IMR-90 (cell line): ENCODE measurements at regions of chr7 and their contacts with region 1.

Region 1: DNA sequence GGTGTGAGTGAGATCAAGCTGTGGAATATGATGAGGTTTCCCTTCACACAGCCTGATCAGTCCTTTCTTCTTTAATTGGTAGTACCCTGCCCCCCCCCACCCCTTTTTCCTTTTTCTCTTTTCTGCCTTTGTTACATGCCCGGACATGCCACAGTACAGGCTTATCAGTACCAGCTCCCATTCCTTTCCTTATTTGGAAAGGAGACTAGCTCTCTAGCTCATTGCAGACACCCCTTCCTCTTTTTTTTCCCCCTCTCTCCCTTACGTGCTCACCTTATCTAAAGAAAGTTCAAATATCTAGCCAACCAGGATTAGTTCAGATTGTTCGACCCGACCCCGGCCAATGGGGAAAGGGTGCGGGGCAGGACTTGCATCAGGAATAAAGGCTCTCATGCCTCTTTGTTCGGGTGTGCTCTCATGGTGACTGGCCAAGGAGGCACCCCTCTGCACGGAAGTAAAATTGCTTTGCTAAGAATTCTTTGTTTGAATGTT is 230.4 kb downstream of the ACTR3B start:
- DNase-seq: peak; percentile 3
- ATAC-seq: peak; percentile 63
- H3K4me3 ChIP-seq: no peak overlapping the region
- H3K27ac ChIP-seq: peak overlapping the region; percentile 78
- H3K4me1 ChIP-seq: peaks cover 2% of the 10 kb centered on the region; the same call in 1 of the 2 replicates
- H3K27me3 ChIP-seq: no peaks in the 10 kb centered on the region
- CTCF ChIP-seq: no peak
- POLR2A ChIP-seq: no peak
- RAD21 ChIP-seq: no peak

Region 2: DNA sequence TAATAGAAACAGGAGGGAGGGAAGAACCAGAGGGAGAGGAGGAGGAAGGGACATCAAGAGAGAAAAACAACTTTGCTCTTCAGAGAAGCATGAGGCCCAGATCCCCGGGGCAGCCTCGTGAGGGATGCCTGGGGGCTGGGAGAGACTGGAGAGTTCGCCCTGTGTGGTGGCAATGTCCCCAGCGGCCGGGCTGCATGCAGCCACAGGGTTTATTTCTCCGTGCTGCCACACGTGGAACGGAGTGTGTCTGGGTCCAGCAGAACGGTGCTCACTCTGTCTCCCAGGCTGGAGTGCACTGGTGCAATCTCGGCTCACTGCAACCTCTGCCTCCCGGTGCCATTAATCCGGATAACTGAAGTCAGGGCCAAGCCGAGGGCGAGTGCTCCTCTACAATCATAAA is 27.3 kb after region 1 on chr7:
- CTCF ChIA-PET with region 1: no interaction called
- POLR2A ChIA-PET with region 1: no interaction called
- dilution Hi-C with region 1: no loop called
- in situ Hi-C with region 1: no loop called
- intact Hi-C with region 1: loop called (anchors 1 kb)
- DNase-seq: no peak
- ATAC-seq: no peak
- H3K4me3 ChIP-seq: no peak overlapping the region
- H3K27ac ChIP-seq: no peak overlapping the region
- H3K4me1 ChIP-seq: no peaks in the 10 kb centered on the region
- H3K27me3 ChIP-seq: no peaks in the 10 kb centered on the region
- CTCF ChIP-seq: no peak
- POLR2A ChIP-seq: no peak
- RAD21 ChIP-seq: no peak

Region 3: DNA sequence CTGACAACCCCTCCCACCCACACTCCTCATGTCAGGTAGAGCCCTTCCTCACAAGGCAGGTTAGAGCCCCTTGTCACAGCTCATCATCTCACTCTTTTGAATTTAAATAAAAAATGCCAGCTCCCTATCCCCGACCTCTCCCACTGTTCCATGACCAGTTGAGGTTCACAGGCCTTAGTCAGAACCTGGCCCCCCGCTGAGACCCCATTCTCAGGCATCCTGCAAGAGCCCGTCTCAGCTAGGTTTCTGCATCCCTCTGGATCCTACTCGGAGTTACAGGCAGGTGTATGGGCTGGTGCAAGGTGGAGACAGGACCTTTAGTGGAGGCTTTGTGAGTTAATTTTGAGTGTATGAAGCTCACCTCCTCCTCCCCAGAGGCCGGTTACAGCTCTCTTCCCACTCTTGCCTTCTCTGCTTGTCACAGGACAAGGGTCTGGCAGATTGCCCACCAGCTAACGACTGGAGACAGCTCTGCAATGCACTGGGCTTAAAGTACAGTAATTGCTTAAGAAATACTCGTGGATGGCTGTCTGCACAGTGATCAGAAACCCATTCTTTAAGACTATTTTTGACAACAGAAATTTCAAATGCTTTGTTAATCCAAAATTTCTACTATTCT is 667.4 kb after region 1 on chr7:
- CTCF ChIA-PET with region 1: no interaction called
- POLR2A ChIA-PET with region 1: no interaction called
- dilution Hi-C with region 1: no loop called
- in situ Hi-C with region 1: no loop called
- intact Hi-C with region 1: no loop called
- DNase-seq: no peak
- ATAC-seq: no peak
- H3K4me3 ChIP-seq: no peak overlapping the region
- H3K27ac ChIP-seq: no peak overlapping the region
- H3K4me1 ChIP-seq: no peaks in the 10 kb centered on the region
- H3K27me3 ChIP-seq: no peaks in the 10 kb centered on the region
- CTCF ChIP-seq: no peak
- POLR2A ChIP-seq: no peak
- RAD21 ChIP-seq: no peak